A673 (cell line): ENCODE measurements at regions of chr20 and their contacts with region 1.

Region 1: DNA sequence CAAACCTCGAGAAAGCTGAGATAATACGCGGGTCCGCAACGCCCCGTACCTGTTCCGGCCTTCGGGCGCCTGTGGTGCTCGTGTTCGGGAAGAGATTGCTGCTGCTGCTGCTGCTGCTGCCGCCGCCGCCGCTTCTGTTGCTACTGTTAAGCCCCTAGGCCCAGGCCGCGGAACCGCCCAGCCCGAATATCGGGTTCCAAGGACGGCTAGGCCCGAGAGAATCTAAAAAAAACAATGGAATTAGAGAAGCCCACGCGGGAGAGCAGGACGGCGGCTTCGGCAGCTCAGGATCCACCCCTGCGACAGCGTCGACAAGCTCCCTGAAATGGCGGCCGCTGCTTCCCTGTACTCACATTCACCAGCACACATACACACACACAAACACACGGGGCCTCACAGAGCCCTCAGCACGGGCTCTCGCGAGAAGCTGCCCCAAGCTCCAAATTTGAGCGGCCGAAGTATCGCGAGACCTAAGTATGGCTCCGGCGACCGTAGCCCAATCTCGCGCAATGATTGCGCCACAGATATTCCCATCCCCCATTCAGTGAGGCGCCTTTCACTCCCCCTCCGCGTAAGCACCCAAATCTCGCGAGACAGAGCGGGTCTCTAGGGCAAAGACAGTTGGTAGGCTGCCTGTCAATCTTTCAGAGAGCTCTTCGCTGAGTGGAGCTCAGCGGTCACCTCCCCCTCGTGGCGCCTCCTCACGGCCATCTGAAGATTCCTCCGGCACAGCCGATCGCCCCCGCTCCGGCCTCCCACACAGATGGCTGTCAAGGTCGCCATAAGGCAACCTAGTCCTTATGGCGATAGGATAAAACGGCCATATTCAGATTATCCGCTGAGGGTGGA is at the start of gene RBM39:
- DNase-seq: peak; percentile 100
- H3K4me3 ChIP-seq: peak within 1 kb of the TSS; percentile 69
- H3K27ac ChIP-seq: peak within 1 kb of the TSS; percentile 99
- H3K4me1 ChIP-seq: peaks cover 29% of the 10 kb centered on the region
- H3K27me3 ChIP-seq: no peaks in the 10 kb centered on the region
- CTCF ChIP-seq: peak; percentile 43; the same call in 1 of the 2 replicates
- total RNA-seq, gene RBM39: 316 and 329 TPM in 2 replicates

Region 2: GRCh38 chr20:35303735-35304491 is 438.2 kb before region 1 on chr20:
- CTCF ChIA-PET with region 1: no interaction called
- POLR2A ChIA-PET with region 1: no interaction called
- intact Hi-C with region 1: no loop called
- DNase-seq: peak; percentile 86
- H3K4me3 ChIP-seq: no peak overlapping the region
- H3K27ac ChIP-seq: no peak overlapping the region
- H3K4me1 ChIP-seq: no peaks in the 10 kb centered on the region
- H3K27me3 ChIP-seq: no peaks in the 10 kb centered on the region
- CTCF ChIP-seq: peak; percentile 95

Region 3: DNA sequence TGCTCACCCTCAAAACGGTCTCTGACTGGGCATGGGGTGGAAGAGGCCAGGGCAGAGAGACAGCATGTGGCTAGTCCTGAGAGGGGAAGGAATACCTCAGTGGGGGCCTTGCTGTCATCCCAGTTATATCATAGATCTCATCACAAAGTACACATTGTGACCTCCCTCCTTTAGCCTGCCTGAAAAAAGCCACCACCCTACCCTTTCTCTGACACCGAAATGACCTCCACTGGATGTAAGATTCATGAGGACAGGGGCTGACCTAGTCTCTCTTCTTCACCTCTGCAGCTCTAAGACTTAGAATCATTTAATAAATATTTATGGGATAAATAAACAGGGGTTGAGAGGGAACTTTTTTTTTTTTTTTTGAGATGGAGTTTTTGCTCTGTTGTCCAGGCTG is 212.6 kb before region 1 on chr20 and contains the start of gene C20orf173:
- CTCF ChIA-PET with region 1: no interaction called
- POLR2A ChIA-PET with region 1: interaction called, 14 read pairs
- intact Hi-C with region 1: no loop called
- DNase-seq: no peak
- H3K4me3 ChIP-seq: no peak within 1 kb of the TSS
- H3K27ac ChIP-seq: no peak within 1 kb of the TSS
- H3K4me1 ChIP-seq: peaks cover 4% of the 10 kb centered on the region
- H3K27me3 ChIP-seq: no peaks in the 10 kb centered on the region
- CTCF ChIP-seq: no peak
- total RNA-seq, gene C20orf173: not detected in 2 replicates

Region 4: DNA sequence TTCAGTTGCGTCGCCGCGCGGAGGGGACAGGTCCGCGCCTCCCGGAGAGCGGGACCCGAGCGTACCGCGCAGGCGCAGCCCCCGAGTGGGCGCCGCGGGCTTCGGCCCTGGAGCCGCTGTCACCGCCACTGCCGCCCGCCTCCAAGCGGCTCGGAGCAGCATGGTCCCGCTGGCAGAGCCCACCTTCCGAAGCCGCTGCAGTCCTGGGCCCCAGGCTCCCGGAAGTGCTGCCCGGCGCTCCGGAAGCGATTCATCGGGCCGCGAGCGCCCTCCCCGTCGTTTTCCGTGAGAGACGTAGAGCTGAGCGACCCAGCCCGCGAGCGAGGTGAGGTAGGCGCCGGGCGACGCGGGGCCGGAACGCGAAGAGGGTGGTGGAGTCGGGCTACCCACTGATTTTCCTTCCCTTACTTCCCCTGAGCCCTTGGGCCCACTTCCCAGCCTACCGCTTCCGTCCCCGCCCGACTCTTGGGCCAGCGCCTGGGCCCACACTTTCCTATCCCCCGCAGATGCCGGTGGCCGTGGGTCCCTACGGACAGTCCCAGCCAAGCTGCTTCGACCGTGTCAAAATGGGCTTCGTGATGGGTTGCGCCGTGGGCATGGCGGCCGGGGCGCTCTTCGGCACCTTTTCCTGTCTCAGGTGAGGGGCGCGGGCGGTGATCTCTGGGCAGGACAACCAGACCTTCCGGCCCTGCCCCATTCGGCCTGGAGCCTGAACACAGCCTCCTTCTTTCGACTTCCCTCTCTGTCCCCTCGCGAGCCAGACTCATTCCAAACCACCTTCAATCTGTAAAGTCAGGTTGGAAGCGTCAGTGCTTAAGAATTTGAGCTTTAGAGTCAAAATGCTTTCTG is 42.8 kb before region 1 on chr20 and contains the starts of genes NFS1 and ROMO1:
- CTCF ChIA-PET with region 1: interaction called, 3 read pairs
- POLR2A ChIA-PET with region 1: interaction called, 3 read pairs
- intact Hi-C with region 1: loop called (anchors 5 kb)
- DNase-seq: peak; percentile 96
- H3K4me3 ChIP-seq: peak within 1 kb of the TSS; percentile 87
- H3K27ac ChIP-seq: peak within 1 kb of the TSS; percentile 89
- H3K4me1 ChIP-seq: peaks cover 28% of the 10 kb centered on the region
- H3K27me3 ChIP-seq: no peaks in the 10 kb centered on the region
- CTCF ChIP-seq: peak; percentile 47
- total RNA-seq, gene NFS1: 22.2 and 23.2 TPM in 2 replicates
- total RNA-seq, gene ROMO1: 134 and 153 TPM in 2 replicates

Region 5: GRCh38 chr20:35776513-35777101 is 34.5 kb after region 1 on chr20:
- CTCF ChIA-PET with region 1: interaction called, 10 read pairs
- POLR2A ChIA-PET with region 1: interaction called, 8 read pairs
- intact Hi-C with region 1: no loop called
- DNase-seq: peak; percentile 51
- H3K4me3 ChIP-seq: no peak overlapping the region
- H3K27ac ChIP-seq: peak overlapping the region; percentile 4
- H3K4me1 ChIP-seq: peaks cover 30% of the 10 kb centered on the region
- H3K27me3 ChIP-seq: no peaks in the 10 kb centered on the region
- CTCF ChIP-seq: no peak